HCT116 (cell line): ENCODE measurements at regions of chr6 and their contacts with region 1.

Region 1: GRCh38 chr6:107674995-107675738 is 148.9 kb downstream of the SCML4 start:
- DNase-seq: peak; percentile 71
- ATAC-seq: peak; percentile 98
- H3K4me3 ChIP-seq: peak overlapping the region; percentile 8 to 39
- H3K27ac ChIP-seq: no peak overlapping the region
- H3K4me1 ChIP-seq: peaks cover 0 to 10% of the 10 kb centered on the region in 2 experiments; a peak in 1 of 4 replicates
- H3K27me3 ChIP-seq: no peaks in the 10 kb centered on the region
- CTCF ChIP-seq: peak; percentile 78 to 98 (median 90)
- POLR2A ChIP-seq: no peak
- RAD21 ChIP-seq: peak; percentile 89

Region 2: DNA sequence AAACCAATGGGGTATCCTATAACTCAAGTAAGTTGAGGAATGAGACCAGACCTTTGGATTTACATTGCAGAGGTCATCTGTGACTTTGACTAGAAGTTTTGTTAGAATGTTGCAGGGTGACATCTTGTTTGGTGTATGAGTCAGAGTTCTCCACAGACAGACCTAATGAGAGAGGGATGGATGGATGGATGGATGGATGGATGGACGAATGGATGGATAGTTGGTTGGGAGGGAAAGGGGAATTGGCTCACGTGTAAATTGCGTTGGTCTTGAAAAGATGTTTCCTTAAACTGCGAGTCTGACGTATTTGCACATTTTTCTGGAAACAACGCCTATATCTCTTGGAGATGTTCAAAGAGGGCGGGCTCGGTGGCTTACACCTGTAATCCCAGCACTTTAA is 648.2 kb before region 1 on chr6:
- CTCF ChIA-PET with region 1: no interaction called
- POLR2A ChIA-PET with region 1: no interaction called
- RAD21 ChIA-PET with region 1: no interaction called
- intact Hi-C with region 1: loop called (anchors 5 kb)
- DNase-seq: no peak
- ATAC-seq: no peak
- H3K4me3 ChIP-seq: no peak overlapping the region
- H3K27ac ChIP-seq: no peak overlapping the region
- H3K4me1 ChIP-seq: peaks cover 6 to 24% of the 10 kb centered on the region in 2 experiments; a peak in 3 of 4 replicates
- H3K27me3 ChIP-seq: no peaks in the 10 kb centered on the region
- CTCF ChIP-seq: no peak
- POLR2A ChIP-seq: no peak
- RAD21 ChIP-seq: no peak

Region 3: GRCh38 chr6:107318100-107318736 is 356.9 kb before region 1 on chr6:
- CTCF ChIA-PET with region 1: interaction called, 12 read pairs
- POLR2A ChIA-PET with region 1: no interaction called
- RAD21 ChIA-PET with region 1: interaction called in 1 of 2 experiments, 3 read pairs
- intact Hi-C with region 1: no loop called
- DNase-seq: peak; percentile 26
- ATAC-seq: peak; percentile 100
- H3K4me3 ChIP-seq: no peak overlapping the region
- H3K27ac ChIP-seq: no peak overlapping the region
- H3K4me1 ChIP-seq: no peaks in the 10 kb centered on the region
- H3K27me3 ChIP-seq: no peaks in the 10 kb centered on the region
- CTCF ChIP-seq: peak; percentile 59 to 87 (median 73); a peak in 5 of 6 replicates
- POLR2A ChIP-seq: no peak
- RAD21 ChIP-seq: peak; percentile 73

Region 4: GRCh38 chr6:107634324-107635056 is 40.7 kb before region 1 on chr6:
- CTCF ChIA-PET with region 1: no interaction called
- POLR2A ChIA-PET with region 1: no interaction called
- RAD21 ChIA-PET with region 1: no interaction called
- intact Hi-C with region 1: no loop called
- DNase-seq: no peak
- ATAC-seq: no peak
- H3K4me3 ChIP-seq: no peak overlapping the region
- H3K27ac ChIP-seq: no peak overlapping the region
- H3K4me1 ChIP-seq: no peaks in the 10 kb centered on the region
- H3K27me3 ChIP-seq: no peaks in the 10 kb centered on the region
- CTCF ChIP-seq: no peak
- POLR2A ChIP-seq: no peak
- RAD21 ChIP-seq: no peak

Region 5: DNA sequence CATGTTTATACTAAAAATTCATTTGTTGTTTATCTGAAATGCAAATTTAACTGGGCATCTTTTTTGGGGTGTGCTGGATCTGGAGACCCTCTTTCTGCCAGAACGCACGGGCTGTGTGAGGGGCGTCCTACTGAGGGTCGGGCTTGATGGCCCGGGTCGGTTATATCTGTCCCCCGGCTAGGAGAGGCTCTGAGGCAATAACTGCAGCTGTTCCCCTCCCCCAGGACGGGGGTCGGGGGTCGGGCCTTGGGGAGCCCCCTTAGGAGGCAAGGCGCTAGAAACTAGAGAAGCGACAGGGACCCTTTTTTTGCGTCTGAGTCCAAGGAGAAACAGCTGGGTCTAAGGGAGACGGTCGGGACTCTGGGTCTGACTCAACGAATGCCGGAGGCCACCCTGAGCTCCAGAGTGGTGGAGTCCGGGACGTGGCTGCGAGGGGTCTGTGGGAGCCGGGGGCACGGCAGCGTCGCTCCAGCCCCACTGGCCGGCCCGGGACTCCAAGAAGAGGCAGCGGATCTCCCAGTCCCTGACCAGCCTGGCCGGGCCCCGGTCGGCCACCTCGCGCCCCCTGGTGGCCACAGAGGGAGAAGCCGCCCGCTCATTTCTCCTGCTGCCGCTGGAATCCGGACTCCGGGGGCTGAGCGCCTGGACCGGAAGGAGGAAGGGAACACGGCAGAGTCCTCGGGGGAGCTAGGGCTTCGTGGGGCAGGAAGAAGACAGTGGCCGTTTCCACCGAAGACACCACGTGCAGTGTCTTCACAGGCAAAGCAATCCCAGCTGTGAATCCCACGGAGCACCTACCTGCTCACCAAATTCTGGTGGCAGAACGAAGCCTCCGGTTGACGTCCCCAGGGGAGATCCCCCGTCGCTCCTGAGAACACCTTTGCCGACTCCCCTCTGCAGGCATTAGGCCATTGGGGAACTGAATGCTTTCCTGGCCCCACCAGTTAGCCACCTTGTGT is 173.0 kb after region 1 on chr6:
- CTCF ChIA-PET with region 1: interaction called, 9 read pairs
- POLR2A ChIA-PET with region 1: no interaction called
- RAD21 ChIA-PET with region 1: interaction called in 1 of 2 experiments, 3 read pairs
- intact Hi-C with region 1: loop called (anchors 1 kb)
- DNase-seq: peak; percentile 34
- ATAC-seq: peak; percentile 97
- H3K4me3 ChIP-seq: peak overlapping the region; percentile 33 to 48
- H3K27ac ChIP-seq: no peak overlapping the region
- H3K4me1 ChIP-seq: peaks cover 2 to 10% of the 10 kb centered on the region in 2 experiments; a peak in 1 of 4 replicates
- H3K27me3 ChIP-seq: no peaks in the 10 kb centered on the region
- CTCF ChIP-seq: peak; percentile 87 to 90 (median 90)
- POLR2A ChIP-seq: no peak
- RAD21 ChIP-seq: peak; percentile 86

Region 6: DNA sequence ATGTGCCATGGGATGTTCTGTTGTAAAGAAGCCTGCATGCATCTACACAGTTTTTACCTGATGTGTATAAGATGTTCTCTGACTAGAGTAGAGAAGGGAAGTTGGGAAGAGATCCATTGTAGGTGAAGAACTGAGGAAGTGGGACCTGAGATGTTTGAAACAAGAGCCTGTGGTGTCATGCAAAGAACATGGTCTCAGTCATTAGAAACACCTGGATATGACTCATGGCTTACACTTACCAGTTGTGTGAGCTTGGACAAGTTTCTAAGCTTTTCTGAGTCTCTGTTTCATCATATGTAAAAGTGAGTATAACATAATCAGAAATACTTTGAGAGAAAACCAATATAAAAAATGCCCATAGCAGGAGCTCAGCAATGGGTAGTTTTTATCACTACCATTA is 334.7 kb after region 1 on chr6:
- CTCF ChIA-PET with region 1: no interaction called
- POLR2A ChIA-PET with region 1: no interaction called
- RAD21 ChIA-PET with region 1: no interaction called
- intact Hi-C with region 1: no loop called
- DNase-seq: no peak
- ATAC-seq: no peak
- H3K4me3 ChIP-seq: no peak overlapping the region
- H3K27ac ChIP-seq: no peak overlapping the region
- H3K4me1 ChIP-seq: no peaks in the 10 kb centered on the region
- H3K27me3 ChIP-seq: no peaks in the 10 kb centered on the region
- CTCF ChIP-seq: no peak
- POLR2A ChIP-seq: no peak
- RAD21 ChIP-seq: no peak

Region 7: DNA sequence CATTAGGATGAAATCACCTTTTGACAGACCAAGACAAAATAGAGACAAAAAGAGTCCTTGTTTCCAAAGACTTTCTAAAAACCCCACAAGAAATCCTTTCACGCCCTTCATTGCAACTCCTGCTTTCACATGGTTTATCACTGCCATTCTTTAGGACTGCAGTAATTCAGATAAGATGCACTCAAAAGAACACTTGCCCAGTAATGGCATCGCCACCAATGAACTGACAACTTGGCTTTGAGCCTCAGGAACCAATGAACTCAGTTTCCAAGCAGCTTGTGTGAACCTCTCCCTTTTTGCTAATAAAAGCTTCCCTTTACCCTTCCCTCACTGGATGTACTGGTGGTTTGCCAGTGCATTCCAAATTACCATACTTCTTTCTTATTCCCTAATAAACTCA is 377.5 kb after region 1 on chr6:
- CTCF ChIA-PET with region 1: interaction called, 3 read pairs
- POLR2A ChIA-PET with region 1: no interaction called
- RAD21 ChIA-PET with region 1: no interaction called
- intact Hi-C with region 1: loop called (anchors 1 kb)
- DNase-seq: no peak
- ATAC-seq: no peak
- H3K4me3 ChIP-seq: no peak overlapping the region
- H3K27ac ChIP-seq: no peak overlapping the region
- H3K4me1 ChIP-seq: no peaks in the 10 kb centered on the region
- H3K27me3 ChIP-seq: no peaks in the 10 kb centered on the region
- CTCF ChIP-seq: no peak
- POLR2A ChIP-seq: no peak
- RAD21 ChIP-seq: no peak